Mammary epithelial cell (primary cell): ENCODE measurements at regions of chr3 and their contacts with region 1.

Region 1: DNA sequence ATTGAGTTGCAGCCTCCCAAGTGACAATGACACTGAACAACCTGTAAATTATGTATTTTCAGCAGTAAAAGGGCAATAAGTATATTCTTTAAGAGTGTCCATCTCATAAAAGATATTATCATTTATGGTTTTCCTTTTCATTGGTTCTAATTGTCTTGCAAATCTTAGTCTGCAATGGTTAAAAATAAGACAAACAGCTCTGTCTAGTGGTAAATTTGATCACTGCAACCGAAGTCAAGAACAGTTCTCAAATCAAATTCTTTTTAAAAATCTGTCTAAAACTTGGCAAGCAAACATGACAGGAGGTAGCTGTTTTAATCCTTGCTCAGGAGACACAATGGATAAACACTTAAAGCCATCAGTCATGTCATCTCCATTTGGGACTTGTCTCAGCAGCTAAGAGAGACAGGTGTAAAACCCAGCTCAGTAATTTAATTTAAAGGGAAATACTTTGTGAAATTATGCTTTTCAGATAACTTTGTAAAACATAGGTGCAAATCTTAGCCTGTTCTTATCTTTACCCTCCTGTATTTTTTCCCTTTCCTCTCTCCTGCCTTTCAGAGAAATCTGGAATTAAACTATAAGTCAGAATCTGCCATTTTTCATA is 150.3 kb upstream of the ARHGEF26 start:
- DNase-seq: no peak
- H3K4me3 ChIP-seq: no peak overlapping the region
- H3K27ac ChIP-seq: no peak overlapping the region
- H3K4me1 ChIP-seq: no peaks in the 10 kb centered on the region
- H3K27me3 ChIP-seq: no peaks in the 10 kb centered on the region
- CTCF ChIP-seq: peak; percentile 62 to 66

Region 2: DNA sequence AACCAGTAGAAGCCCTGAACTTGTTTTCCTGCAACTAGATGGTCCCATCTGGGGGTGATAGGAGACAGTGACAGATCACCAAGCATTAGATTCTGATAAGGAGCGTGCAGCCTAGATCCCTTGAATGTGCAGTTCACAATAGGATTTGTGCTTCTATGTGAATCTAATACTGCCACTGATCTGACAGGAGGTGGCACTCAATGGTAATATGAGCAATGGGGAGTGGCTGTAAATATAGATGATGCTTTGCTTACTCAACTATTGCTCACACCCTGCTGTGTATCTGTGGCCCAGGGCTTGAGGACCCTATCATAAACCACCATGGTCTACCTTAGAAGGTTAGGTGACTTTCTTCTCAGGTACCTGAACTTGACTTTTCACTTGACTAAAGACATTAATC is 266.7 kb before region 1 on chr3:
- CTCF ChIA-PET with region 1: no interaction called
- dilution Hi-C with region 1: no loop called
- in situ Hi-C with region 1: no loop called
- intact Hi-C with region 1: loop called (anchors 1 kb)
- DNase-seq: peak; percentile 17
- H3K4me3 ChIP-seq: no peak overlapping the region
- H3K27ac ChIP-seq: no peak overlapping the region
- H3K4me1 ChIP-seq: no peaks in the 10 kb centered on the region
- H3K27me3 ChIP-seq: no peaks in the 10 kb centered on the region
- CTCF ChIP-seq: peak in 1 of 2 donors; percentile 48

Region 3: GRCh38 chr3:153783106-153783505 is 187.7 kb before region 1 on chr3:
- CTCF ChIA-PET with region 1: no interaction called
- dilution Hi-C with region 1: no loop called
- in situ Hi-C with region 1: no loop called
- intact Hi-C with region 1: loop called (anchors 10 kb)
- DNase-seq: no peak
- H3K4me3 ChIP-seq: no peak overlapping the region
- H3K27ac ChIP-seq: no peak overlapping the region
- H3K4me1 ChIP-seq: no peaks in the 10 kb centered on the region
- H3K27me3 ChIP-seq: no peaks in the 10 kb centered on the region
- CTCF ChIP-seq: no peak

Region 4: GRCh38 chr3:154081305-154081704 is 110.5 kb after region 1 on chr3:
- CTCF ChIA-PET with region 1: no interaction called
- dilution Hi-C with region 1: no loop called
- in situ Hi-C with region 1: no loop called
- intact Hi-C with region 1: no loop called
- DNase-seq: no peak
- H3K4me3 ChIP-seq: no peak overlapping the region
- H3K27ac ChIP-seq: no peak overlapping the region
- H3K4me1 ChIP-seq: no peaks in the 10 kb centered on the region
- H3K27me3 ChIP-seq: no peaks in the 10 kb centered on the region
- CTCF ChIP-seq: no peak